Posterior vena cava (tissue), 2 donors: ENCODE measurements at regions of chr7 and their contacts with region 1.

Region 1: DNA sequence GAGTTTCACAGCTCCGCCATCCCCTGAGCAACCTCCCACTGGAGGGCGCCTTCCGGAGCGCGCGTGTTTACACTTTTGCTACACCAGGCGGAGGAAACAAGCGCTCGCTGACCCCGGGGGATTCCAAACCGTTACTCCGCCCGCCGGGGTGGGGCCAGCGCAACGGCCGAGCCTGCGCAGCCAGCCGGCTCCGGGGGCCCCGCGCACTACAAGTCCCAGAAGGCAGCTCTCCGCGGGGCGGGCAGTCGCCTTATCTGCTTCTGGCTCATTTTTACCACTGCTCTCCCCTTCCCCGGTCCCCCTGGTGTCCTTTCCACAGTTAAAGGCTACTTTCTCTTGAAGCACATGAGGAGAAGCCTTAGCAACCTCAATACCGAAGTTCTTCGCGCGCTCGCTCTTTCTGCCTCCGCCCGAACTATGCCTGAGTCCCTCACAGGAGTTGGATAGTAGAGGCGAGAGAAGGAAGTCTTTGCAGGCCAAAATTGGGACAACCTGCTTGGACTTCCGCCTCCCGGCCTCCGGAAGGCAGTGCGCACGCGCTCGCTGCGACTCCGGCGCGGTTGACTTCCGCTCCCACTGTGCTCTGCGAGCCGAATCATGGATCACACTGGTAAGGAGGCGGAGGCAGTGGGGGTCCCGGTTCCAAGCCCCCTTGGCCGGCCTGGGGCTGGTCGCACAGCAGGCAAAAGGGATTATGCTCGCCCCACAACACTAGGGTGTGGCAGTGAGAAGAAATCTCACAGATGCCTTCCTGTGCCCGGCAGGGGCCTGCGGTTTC is at the start of gene CBLL1:
- DNase-seq: peak; percentile 99
- total RNA-seq, gene CBLL1: 18.6 to 20.7 TPM

Region 2: GRCh38 chr7:107563775-107564552 is 179.8 kb before region 1 on chr7 and contains the starts of genes COG5 and DUS4L:
- intact Hi-C with region 1: loop called in 1 of 2 experiments (anchors 10 kb)
- DNase-seq: peak; percentile 94
- total RNA-seq, gene COG5: 41.8 to 50.2 TPM
- total RNA-seq, gene DUS4L: 5.4 to 6.6 TPM

Region 3: DNA sequence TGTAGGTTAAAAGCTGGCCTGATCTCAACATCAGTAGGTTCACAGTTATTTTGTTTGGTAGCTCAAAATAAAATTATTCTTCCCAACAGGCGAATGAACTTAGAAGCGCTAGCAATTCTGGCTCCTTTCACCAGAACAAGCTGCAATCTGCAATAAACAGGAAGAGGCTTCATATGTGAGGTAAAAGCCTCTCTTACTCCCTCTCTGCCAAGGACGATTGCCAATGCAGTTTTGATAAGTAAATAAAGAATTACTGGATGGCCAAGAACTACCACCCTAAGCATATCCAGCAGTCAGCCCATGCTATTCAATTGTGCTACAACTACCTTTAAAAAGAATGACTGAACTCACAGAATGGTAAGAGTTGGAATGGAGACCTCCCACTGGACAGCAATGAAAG is 536.4 kb after region 1 on chr7:
- intact Hi-C with region 1: no loop called
- DNase-seq: no peak

Region 4: DNA sequence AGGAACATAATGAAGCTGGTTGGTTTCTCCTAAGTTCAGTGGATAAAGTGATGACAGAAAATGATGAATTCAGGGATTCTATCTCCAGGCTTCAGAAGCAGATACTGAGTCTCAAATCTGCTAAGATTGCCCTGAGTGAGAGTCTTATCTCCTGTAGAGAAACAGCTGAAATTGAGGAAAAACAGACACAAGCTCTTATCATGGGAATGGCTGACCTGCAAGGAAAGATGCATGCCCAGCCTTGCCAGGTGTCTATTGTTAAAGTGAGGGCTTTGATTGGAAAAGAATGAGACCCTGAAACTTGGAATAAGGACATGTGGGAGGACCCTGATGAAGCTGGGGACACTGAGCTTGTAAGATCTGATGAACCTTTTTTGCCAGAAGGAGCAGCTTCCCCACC is 926.2 kb after region 1 on chr7:
- intact Hi-C with region 1: no loop called
- DNase-seq: no peak